Esophagus muscularis mucosa (tissue), 4 donors: ENCODE measurements at regions of chr20 and their contacts with region 1.

Region 1: GRCh38 chr20:44394702-44395460 is 39.4 kb downstream of the HNF4A start:
- DNase-seq: no peak
- H3K4me3 ChIP-seq: no peak overlapping the region
- H3K27ac ChIP-seq: no peak overlapping the region
- H3K4me1 ChIP-seq: no peaks in the 10 kb centered on the region
- H3K27me3 ChIP-seq: peaks cover 0 to 30% (median 0%) of the 10 kb centered on the region in 4 donors
- CTCF ChIP-seq: no peak
- EP300 ChIP-seq: no peak
- POLR2A ChIP-seq: no peak

Region 2: GRCh38 chr20:44210422-44211176 is 184.3 kb before region 1 on chr20 and contains the start of gene OSER1:
- intact Hi-C with region 1: no loop called
- DNase-seq: peak; percentile 100
- H3K4me3 ChIP-seq: peak within 1 kb of the TSS; percentile 81 to 94 (median 92)
- H3K27ac ChIP-seq: peak within 1 kb of the TSS; percentile 96 to 99 (median 98)
- H3K4me1 ChIP-seq: peaks cover 51 to 71% (median 57%) of the 10 kb centered on the region in 4 donors
- H3K27me3 ChIP-seq: no peaks in the 10 kb centered on the region
- CTCF ChIP-seq: peak in 1 of 3 experiments; percentile 16
- EP300 ChIP-seq: no peak
- POLR2A ChIP-seq: peak; percentile 93
- total RNA-seq, gene OSER1: 45.2 to 94.4 (median 71.0) TPM

Region 3: GRCh38 chr20:44460795-44461141 is 65.9 kb after region 1 on chr20:
- intact Hi-C with region 1: loop called (anchors 5 kb)
- DNase-seq: no peak
- H3K4me3 ChIP-seq: no peak overlapping the region
- H3K27ac ChIP-seq: no peak overlapping the region
- H3K4me1 ChIP-seq: no peaks in the 10 kb centered on the region
- H3K27me3 ChIP-seq: no peaks in the 10 kb centered on the region
- CTCF ChIP-seq: peak; percentile 7 to 28 (median 24)
- EP300 ChIP-seq: no peak
- POLR2A ChIP-seq: no peak

Region 4: DNA sequence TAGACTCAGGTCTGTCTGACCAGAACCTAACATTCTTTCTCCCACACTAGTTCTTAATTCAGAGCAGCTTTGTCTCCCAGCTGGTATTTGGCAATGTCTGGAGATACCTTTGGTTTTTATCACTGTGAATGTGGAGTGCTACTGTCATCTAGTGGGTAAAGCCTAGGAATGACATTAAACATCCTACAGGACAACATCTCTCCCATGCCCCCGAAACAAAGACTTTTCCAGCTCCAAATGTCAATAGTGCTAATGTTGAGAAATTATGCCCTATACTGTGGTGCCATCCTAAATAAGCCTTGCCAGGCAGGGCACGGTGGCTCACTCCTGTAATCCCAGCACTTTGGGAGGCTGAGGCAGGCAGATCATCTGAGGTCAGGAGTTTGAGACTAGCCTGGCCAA is 76.6 kb after region 1 on chr20:
- intact Hi-C with region 1: no loop called
- DNase-seq: no peak
- H3K4me3 ChIP-seq: no peak overlapping the region
- H3K27ac ChIP-seq: no peak overlapping the region
- H3K4me1 ChIP-seq: peaks cover 6 to 14% (median 13%) of the 10 kb centered on the region in 4 donors
- H3K27me3 ChIP-seq: no peaks in the 10 kb centered on the region
- CTCF ChIP-seq: peak in 1 of 3 experiments; percentile 27
- EP300 ChIP-seq: no peak
- POLR2A ChIP-seq: no peak

Region 5: DNA sequence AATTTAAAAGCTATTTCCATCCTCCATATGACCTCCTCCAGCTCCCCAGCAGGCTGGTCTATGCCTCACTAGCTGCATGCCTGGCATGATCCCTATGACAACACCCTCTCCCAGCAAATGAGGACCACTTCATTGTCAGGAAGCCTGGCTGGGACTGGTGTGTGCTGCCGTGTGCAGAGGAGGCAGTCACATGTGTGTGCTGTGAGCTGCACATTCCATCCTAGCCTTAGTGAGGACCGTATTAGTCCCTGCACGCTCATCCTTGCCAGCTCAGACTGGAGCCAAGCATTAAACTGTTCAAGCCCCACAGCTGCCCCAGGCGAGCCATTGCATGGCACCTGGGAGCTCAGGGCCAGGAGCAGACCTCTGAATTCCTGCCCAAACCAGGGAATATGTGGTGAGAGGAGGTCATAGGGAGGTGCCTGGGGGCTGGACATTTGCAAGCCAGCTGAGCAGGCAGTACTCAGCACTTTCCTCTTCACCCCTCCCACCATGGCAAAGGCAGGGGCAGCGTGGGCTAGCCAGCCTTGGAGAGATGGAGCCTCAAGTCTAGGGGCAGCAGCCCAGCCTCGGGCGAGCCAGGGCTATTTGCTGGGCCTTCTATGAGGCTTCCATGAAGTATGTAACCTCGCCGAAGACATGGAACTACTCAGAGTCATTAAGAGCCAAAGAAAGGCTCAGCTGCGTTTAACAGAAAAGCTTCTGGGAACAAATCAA is 311.6 kb after region 1 on chr20:
- intact Hi-C with region 1: no loop called
- DNase-seq: no peak
- H3K4me3 ChIP-seq: no peak overlapping the region
- H3K27ac ChIP-seq: peak overlapping the region; percentile 82 to 91 (median 84)
- H3K4me1 ChIP-seq: peaks cover 30 to 68% (median 55%) of the 10 kb centered on the region in 4 donors
- H3K27me3 ChIP-seq: no peaks in the 10 kb centered on the region
- CTCF ChIP-seq: no peak
- EP300 ChIP-seq: no peak
- POLR2A ChIP-seq: no peak